ENCODE measurements at regions of chr11 and their contacts with region 1.

Region 1: GRCh38 chr11:10405855-10406592 is 49.0 kb upstream of the AMPD3 start:
- DNase-seq: peak; percentile 52
- H3K4me3 ChIP-seq: no peak overlapping the region
- CTCF ChIP-seq: peak; percentile 62

Region 2: GRCh38 chr11:10366568-10367370 is 39.3 kb before region 1 on chr11:
- CTCF ChIA-PET with region 1: interaction called, 10 read pairs
- POLR2A ChIA-PET with region 1: no interaction called
- DNase-seq: peak; percentile 76
- H3K4me3 ChIP-seq: no peak overlapping the region
- CTCF ChIP-seq: peak; percentile 86

Region 3: GRCh38 chr11:10394229-10395101 is 11.6 kb before region 1 on chr11:
- CTCF ChIA-PET with region 1: interaction called, 16 read pairs
- POLR2A ChIA-PET with region 1: no interaction called
- DNase-seq: no peak
- H3K4me3 ChIP-seq: no peak overlapping the region
- CTCF ChIP-seq: no peak

Region 4: DNA sequence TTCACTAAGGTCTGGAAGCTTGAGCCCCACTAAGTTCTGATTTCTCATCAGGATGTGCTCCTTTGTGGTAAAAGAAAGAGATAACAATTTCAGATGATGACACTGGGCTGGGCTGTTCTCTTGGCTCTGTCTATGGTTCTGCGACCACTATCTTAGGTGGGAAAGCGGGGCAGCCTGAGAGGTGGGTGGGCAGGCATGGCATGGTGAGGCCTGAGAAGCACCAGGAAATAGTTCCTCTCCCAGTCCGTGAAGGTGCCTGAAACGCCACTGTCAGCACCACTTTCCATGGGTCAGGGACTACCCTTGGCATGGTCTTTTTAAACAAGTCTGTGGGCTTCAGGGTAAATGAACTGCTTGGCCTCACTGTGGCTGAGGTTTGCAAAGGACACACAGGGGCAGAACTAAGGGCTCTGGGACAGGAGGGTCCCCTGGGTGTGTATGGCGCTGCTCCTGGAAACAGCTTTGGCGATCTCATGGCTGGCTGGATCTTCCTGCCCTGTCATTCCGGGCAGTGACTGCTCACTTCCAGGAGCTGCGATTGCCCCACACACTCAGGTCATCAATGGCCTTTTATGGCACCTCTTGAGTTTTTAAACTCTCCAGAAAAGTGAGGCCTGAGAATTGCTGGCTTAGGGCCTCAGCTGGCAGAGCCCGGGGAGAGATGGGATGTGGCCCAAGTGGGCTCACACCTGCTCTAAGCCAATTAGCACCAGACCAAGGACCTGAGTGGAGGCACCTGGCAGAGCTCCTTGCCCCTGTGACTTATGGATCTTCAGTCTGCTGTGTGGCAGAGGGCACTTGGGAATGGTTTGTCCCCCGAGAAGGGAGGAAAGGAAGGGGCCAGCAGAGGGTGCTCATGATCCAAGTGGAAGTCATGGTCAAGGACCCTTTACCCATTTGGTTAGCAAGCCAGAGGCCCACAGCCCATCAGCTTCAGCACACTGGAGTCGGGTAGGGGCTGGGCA is 218.1 kb after region 1 on chr11:
- CTCF ChIA-PET with region 1: interaction called, 10 read pairs
- POLR2A ChIA-PET with region 1: no interaction called
- DNase-seq: no peak
- H3K4me3 ChIP-seq: no peak overlapping the region
- CTCF ChIP-seq: peak; percentile 52

Region 5: DNA sequence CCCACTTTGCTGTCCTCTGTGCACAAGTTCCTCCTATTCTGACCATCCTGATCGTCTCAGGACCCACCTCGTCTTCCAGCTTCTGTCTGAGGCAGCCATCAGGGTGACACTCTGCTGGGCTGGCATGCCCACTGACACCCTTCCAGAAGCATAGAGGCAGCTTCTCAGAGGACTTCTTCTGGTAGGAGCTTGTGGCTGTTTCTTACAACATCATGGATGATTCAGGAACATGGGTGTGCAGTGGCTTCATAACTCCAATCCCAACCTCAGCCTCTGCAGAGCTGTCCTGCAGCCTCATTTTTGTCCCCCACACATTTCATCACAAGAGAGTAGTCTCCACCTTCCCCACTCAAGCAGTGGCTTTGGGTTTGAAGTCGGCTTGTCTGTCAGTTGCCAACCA is 324.1 kb after region 1 on chr11:
- CTCF ChIA-PET with region 1: interaction called, 41 read pairs
- POLR2A ChIA-PET with region 1: no interaction called
- DNase-seq: no peak
- H3K4me3 ChIP-seq: no peak overlapping the region
- CTCF ChIP-seq: no peak